GM12878 (cell line): ENCODE measurements at regions of chr20 and their contacts with region 1.

Region 1: DNA sequence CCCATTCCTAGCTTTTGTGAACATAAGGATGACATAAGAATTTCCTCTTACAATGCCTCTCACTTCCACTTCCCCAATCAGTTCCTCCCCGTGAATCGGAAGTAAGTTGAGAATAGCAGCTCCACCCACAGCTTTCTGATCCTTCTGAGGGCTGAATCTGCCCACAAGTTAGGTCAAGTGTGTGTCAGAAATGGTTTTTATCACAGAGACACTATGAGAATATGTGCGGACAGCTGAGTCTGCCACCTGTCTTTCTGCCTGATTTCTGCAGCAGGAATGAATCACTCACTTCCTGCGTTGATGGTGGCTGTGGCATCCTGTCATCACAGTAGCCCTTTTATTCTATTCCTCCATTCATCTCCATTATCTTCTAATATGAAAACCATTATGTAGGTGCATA is 70.2 kb downstream of the RIN2 start:
- DNase-seq: peak; percentile 68
- ATAC-seq: peak; percentile 98
- H3K4me3 ChIP-seq: no peak overlapping the region
- H3K27ac ChIP-seq: no peak overlapping the region
- H3K4me1 ChIP-seq: peaks cover 10% of the 10 kb centered on the region
- H3K27me3 ChIP-seq: no peaks in the 10 kb centered on the region; a peak in 1 of 4 replicates
- CTCF ChIP-seq: peak; percentile 15 to 51 (median 42); a peak in 4 of 6 replicates
- EP300 ChIP-seq: peak; percentile 33 to 53; a peak in 2 of 4 replicates
- POLR2A ChIP-seq: no peak
- RAD21 ChIP-seq: peak; percentile 39

Region 2: DNA sequence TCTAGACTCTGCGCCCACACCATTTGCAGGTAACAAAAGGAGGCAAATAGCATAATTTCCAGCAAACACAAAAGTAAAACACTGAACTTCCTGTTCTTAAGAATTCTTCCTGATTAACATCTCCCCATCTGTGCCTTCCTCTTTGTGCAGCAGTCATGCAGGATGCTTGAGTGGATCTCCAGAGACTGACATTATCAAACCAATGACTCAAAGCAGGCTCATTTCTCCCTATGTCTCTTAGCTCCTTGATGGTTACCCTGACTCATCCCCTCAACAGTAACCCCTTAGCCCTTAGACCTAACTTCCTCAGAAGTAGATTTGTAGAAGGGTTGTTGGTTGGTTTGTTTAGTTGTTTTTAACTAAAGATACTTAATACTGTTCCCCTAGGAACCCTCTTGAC is 207.2 kb before region 1 on chr20:
- CTCF ChIA-PET with region 1: no interaction called
- POLR2A ChIA-PET with region 1: no interaction called
- RAD21 ChIA-PET with region 1: no interaction called
- SMC1A ChIA-PET with region 1: no interaction called
- in situ Hi-C with region 1: no loop called
- intact Hi-C with region 1: no loop called
- DNase-seq: no peak
- ATAC-seq: no peak
- H3K4me3 ChIP-seq: no peak overlapping the region
- H3K27ac ChIP-seq: no peak overlapping the region
- H3K4me1 ChIP-seq: no peaks in the 10 kb centered on the region
- H3K27me3 ChIP-seq: no peaks in the 10 kb centered on the region; a peak in 1 of 4 replicates
- CTCF ChIP-seq: no peak
- EP300 ChIP-seq: no peak
- POLR2A ChIP-seq: no peak
- RAD21 ChIP-seq: no peak

Region 3: DNA sequence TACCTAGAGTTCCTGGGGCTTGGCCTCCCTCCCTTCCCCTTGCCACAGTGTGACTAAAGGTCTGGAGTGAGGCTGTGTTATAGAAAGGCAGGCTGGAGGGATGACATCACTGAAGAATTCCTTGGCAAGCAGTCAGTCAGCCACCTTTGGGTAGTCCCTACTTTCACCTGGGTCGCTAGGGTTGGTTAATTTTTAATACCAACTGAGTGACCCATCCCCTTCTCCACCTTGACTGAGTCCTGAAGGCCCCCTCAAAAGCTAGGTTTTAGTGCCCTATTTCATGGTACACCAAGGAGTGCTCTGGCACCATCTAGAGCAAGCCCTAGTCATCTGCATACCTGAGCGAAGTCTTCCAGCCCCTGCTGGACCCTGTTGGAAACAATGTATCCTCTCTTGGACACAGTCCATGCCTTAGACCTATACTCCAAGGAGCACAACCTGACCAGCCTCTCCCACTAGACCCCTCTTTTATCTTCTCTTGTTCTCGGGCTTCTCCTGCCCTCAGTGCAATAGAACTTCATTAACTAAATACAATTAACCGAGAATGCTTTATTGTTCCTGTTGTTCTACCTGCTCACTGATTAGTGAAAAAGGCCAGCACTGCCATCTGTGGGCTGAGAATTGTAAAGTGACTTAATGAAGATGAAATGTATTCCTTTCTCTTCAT is 25.6 kb before region 1 on chr20:
- CTCF ChIA-PET with region 1: interaction called, 15 read pairs
- POLR2A ChIA-PET with region 1: no interaction called
- RAD21 ChIA-PET with region 1: interaction called, 9 read pairs
- SMC1A ChIA-PET with region 1: interaction called, 4 read pairs
- in situ Hi-C with region 1: no loop called
- intact Hi-C with region 1: no loop called
- DNase-seq: no peak
- ATAC-seq: peak; percentile 82
- H3K4me3 ChIP-seq: no peak overlapping the region
- H3K27ac ChIP-seq: no peak overlapping the region
- H3K4me1 ChIP-seq: no peaks in the 10 kb centered on the region
- H3K27me3 ChIP-seq: no peaks in the 10 kb centered on the region
- CTCF ChIP-seq: peak in 2 of 3 experiments; percentile 12 to 29; a peak in 3 of 6 replicates
- EP300 ChIP-seq: no peak
- POLR2A ChIP-seq: no peak
- RAD21 ChIP-seq: 0 out of 2 replicates have a peak, but pooled peaks have one; percentile 1

Region 4: GRCh38 chr20:19889011-19889953 is 61.0 kb after region 1 on chr20:
- CTCF ChIA-PET with region 1: interaction called, 3 read pairs
- POLR2A ChIA-PET with region 1: no interaction called
- RAD21 ChIA-PET with region 1: interaction called, 3 read pairs
- SMC1A ChIA-PET with region 1: interaction called, 14 read pairs
- in situ Hi-C with region 1: no loop called
- intact Hi-C with region 1: no loop called
- DNase-seq: no peak
- ATAC-seq: no peak
- H3K4me3 ChIP-seq: no peak overlapping the region
- H3K27ac ChIP-seq: no peak overlapping the region
- H3K4me1 ChIP-seq: no peaks in the 10 kb centered on the region
- H3K27me3 ChIP-seq: peaks cover 0 to 11% of the 10 kb centered on the region in 2 experiments; a peak in 3 of 4 replicates
- CTCF ChIP-seq: no peak
- EP300 ChIP-seq: no peak
- POLR2A ChIP-seq: no peak
- RAD21 ChIP-seq: no peak

Region 5: DNA sequence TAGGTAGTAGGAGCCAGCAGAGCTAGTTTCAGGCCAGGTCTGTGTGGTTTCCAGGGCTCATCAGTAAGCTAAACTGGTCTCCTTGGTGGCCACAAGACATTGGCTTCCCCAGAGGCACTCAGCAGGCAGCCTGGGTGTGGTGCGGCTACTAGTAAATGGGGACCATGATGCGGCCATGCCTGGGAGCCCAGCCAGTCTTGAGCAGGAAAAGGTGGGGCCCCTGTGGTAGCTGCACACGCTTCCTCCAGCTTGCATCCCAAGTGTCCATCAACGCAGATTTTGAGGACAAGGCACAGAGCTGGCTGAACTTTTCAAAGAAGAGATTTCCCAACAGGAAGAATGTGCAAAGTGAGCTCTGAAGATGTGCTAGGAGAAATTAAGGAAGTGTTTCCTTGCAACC is 81.5 kb after region 1 on chr20:
- CTCF ChIA-PET with region 1: interaction called, 7 read pairs
- POLR2A ChIA-PET with region 1: no interaction called
- RAD21 ChIA-PET with region 1: interaction called, 4 read pairs
- SMC1A ChIA-PET with region 1: interaction called, 11 read pairs
- in situ Hi-C with region 1: no loop called
- intact Hi-C with region 1: no loop called
- DNase-seq: no peak
- ATAC-seq: no peak
- H3K4me3 ChIP-seq: no peak overlapping the region
- H3K27ac ChIP-seq: no peak overlapping the region
- H3K4me1 ChIP-seq: peaks cover 37% of the 10 kb centered on the region
- H3K27me3 ChIP-seq: no peaks in the 10 kb centered on the region
- CTCF ChIP-seq: no peak
- EP300 ChIP-seq: no peak
- POLR2A ChIP-seq: no peak
- RAD21 ChIP-seq: no peak